Heart right ventricle (tissue), 16 donors: ENCODE measurements at regions of chr15 and their contacts with region 1.

Region 1: DNA sequence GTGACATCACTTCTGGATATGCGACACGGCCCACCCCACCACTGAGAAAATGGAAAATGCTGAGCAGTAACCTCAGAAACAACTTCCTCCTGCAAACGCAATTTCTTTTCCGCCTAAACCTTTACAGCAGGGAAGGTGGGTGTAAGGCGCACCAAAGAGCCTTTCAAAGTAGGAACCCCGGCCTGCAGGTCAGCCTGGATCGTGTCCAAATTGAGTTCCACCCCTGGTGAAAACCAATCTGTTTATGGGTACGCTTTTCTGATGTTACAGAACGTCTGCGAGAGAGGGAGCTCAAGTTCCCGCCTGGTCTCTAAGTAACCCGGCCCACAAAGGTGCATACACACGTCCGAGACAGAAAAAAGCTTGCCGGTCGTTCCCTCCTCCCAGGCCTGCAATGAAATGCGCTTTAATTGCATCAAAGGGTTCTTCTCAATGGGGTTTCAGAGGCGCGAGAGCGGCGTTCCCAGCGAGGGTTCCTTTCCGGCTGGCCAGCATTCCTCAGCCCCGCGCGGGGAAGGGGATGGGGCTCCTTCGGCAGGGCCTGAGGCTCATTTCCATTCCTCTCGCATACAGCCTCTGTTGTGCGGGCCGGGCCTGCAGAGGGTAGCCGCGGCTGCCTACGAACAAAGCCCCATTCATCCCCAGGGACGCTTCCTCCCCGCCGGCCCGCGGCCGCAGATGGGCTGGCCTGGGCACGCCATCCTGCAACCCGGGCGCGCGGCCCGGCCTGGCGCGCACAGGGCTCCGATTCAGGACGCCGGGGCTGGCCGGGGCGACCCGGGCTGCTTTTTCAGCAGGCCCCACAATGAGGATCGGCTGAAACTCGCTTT is 138.1 kb downstream of the TMCO5A start:
- DNase-seq: peak; percentile 65 to 79
- ATAC-seq: peak; percentile 86 to 97 (median 89)
- H3K4me3 ChIP-seq: peak overlapping the region; percentile 37 to 73 (median 63)
- H3K27ac ChIP-seq: peak overlapping the region; percentile 83 to 96 (median 90)
- H3K4me1 ChIP-seq: peaks cover 8 to 54% (median 39%) of the 10 kb centered on the region in 9 donors
- H3K27me3 ChIP-seq: peaks cover 0 to 3% (median 0%) of the 10 kb centered on the region in 7 donors
- CTCF ChIP-seq: peak in 4 of 9 donors; percentile 22 to 49 (median 33)

Region 2: GRCh38 chr15:38129531-38130204 is 57.1 kb after region 1 on chr15:
- intact Hi-C with region 1: loop called in 2 of 10 experiments (anchors 1 to 10 kb)
- DNase-seq: peak; percentile 31 to 85
- ATAC-seq: peak; percentile 79 to 90 (median 87)
- H3K4me3 ChIP-seq: peak overlapping the region in 6 of 10 donors; percentile 25 to 38 (median 31)
- H3K27ac ChIP-seq: peak overlapping the region; percentile 36 to 90 (median 80)
- H3K4me1 ChIP-seq: peaks cover 0 to 59% (median 30%) of the 10 kb centered on the region in 9 donors
- H3K27me3 ChIP-seq: no peaks in the 10 kb centered on the region
- CTCF ChIP-seq: no peak

Region 3: DNA sequence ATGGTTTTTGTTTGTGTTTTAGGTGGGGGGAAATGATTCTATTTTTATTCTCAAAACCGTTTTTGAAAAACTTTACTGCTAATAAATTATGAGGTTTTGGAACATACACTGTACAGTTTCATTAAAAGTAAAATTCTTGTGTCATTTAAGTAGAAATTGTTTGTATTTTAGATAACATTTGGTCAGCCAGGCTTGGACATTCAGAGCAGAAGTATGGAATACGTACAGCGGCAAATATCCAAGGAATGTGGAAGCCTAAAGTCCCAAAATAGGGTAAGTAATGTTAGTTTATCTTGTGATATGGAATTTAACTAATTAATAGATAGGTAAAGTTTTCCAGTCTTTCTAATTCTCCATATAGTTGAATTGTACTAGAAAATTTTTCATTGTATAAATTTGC is 276.7 kb after region 1 on chr15:
- intact Hi-C with region 1: loop called in 5 of 10 experiments (anchors 5 to 10 kb)
- DNase-seq: no peak
- ATAC-seq: no peak
- H3K4me3 ChIP-seq: no peak overlapping the region
- H3K27ac ChIP-seq: no peak overlapping the region
- H3K4me1 ChIP-seq: peaks cover 0 to 5% (median 0%) of the 10 kb centered on the region in 9 donors
- H3K27me3 ChIP-seq: no peaks in the 10 kb centered on the region
- CTCF ChIP-seq: no peak

Region 4: DNA sequence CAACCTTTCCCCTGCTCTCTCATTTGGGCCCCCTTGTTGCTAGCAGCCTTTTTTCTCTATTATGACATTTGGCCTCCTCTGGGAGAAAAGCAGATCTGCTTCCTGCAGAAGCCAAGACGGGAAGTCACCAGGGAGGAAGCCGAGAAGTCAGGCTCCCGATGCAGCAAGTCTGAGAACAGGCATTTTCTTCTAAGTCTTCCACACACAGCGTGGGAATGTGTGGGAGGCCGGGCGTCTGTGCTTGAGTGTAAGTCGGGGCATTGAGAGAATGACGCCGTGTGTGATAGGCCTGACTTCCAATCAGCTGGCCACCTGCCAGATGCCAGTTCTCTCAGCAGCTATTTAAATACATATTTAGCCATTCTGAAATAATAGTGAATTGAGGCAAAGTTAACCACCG is 305.6 kb after region 1 on chr15:
- intact Hi-C with region 1: loop called in 1 of 10 experiments (anchors 10 kb)
- DNase-seq: peak; percentile 66 to 78
- ATAC-seq: peak; percentile 74 to 88 (median 81)
- H3K4me3 ChIP-seq: no peak overlapping the region
- H3K27ac ChIP-seq: peak overlapping the region; percentile 22 to 80 (median 68)
- H3K4me1 ChIP-seq: peaks cover 4 to 54% (median 33%) of the 10 kb centered on the region in 9 donors
- H3K27me3 ChIP-seq: no peaks in the 10 kb centered on the region
- CTCF ChIP-seq: no peak